CD4-positive, alpha-beta memory T cell (primary cell): ENCODE measurements at regions of chr15 and their contacts with region 1.

Region 1: DNA sequence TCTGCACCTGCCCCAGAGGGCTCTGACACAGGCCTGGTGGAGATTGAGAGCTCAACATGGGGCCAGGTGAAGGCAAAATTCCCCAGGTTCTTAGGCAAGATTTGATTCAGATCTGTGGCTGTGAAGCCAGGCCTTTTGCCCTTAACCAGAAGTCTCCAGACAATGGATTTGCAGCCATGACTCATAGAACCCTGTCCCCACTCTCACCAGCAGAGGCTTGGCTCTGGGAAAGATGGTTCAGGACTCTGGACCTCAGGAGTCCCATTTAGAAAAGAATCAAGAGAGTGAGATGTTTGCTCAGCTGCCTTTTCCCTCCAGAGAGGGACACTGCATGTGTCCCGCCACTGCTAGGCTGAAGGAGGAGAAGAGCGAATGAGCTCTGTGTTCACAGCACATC is 361.4 kb upstream of the ICE2 start:
- DNase-seq: peak in 1 of 5 donors; percentile 64
- H3K4me3 ChIP-seq: peak overlapping the region; percentile 48 to 60
- H3K4me3 Mint-ChIP-seq: peak overlapping the region; percentile 86 to 93 (median 91)
- H3K27ac ChIP-seq: peak overlapping the region; percentile 66
- H3K27ac Mint-ChIP-seq: peak overlapping the region; percentile 90 to 99 (median 96)
- H3K4me1 ChIP-seq: peaks cover 93% of the 10 kb centered on the region
- H3K4me1 Mint-ChIP-seq: peaks cover 68 to 98% (median 85%) of the 10 kb centered on the region in 4 donors
- H3K27me3 ChIP-seq: no peaks in the 10 kb centered on the region
- H3K27me3 Mint-ChIP-seq: no peaks in the 10 kb centered on the region

Region 2: DNA sequence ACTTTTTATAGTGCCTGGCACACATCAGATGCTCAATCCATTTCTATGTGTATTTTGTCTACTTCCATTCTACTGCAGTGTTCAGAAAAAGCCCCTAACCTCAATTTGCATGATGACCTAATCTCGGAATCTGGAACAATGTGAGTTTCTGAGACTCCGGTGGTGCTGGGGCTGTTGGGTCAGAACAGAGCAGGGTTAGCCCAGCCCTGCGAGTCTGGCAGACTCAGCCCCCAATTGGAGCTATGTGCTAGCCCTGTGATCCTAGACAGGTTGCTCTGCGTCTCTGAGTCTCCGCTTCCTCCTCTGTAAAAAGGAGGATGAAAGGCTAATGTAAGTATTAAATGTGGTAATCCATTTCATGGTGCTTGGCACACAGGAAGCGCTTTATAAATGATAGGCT is 266.4 kb before region 1 on chr15:
- CTCF ChIA-PET with region 1: interaction called, 4 read pairs
- POLR2A ChIA-PET with region 1: interaction called, 10 read pairs
- intact Hi-C with region 1: no loop called
- DNase-seq: peak; percentile 61 to 90 (median 63)
- H3K4me3 ChIP-seq: peak overlapping the region in 1 of 2 donors; percentile 12
- H3K4me3 Mint-ChIP-seq: peak overlapping the region; percentile 81 to 94 (median 89)
- H3K27ac ChIP-seq: peak overlapping the region; percentile 74
- H3K27ac Mint-ChIP-seq: peak overlapping the region; percentile 92 to 100 (median 99)
- H3K4me1 ChIP-seq: peaks cover 99% of the 10 kb centered on the region
- H3K4me1 Mint-ChIP-seq: peaks cover 76 to 96% (median 86%) of the 10 kb centered on the region in 4 donors
- H3K27me3 ChIP-seq: no peaks in the 10 kb centered on the region
- H3K27me3 Mint-ChIP-seq: no peaks in the 10 kb centered on the region

Region 3: DNA sequence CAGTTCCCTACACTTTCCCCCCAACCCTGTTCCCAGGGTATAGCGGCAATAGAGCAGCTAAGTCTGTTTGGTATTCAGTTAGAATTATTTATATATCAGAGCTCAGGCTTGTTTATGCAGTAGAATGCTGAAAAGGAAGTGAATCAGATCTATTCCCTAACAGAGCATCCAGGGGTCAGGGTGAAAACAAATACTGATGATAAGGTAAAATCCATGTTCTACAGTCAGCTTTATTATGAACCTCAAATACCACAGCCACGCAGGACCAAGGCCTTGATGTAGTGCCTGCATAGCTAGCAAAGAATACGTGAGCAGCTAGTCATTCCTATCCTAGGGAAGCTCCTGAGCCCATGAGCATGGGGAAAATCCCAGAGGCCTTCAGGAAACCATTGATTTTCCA is 131.6 kb before region 1 on chr15:
- CTCF ChIA-PET with region 1: interaction called, 3 read pairs
- POLR2A ChIA-PET with region 1: interaction called, 88 read pairs
- intact Hi-C with region 1: loop called (anchors 1 kb)
- DNase-seq: no peak
- H3K4me3 ChIP-seq: no peak overlapping the region
- H3K4me3 Mint-ChIP-seq: peak overlapping the region in 4 of 8 donors; percentile 0 to 48 (median 6)
- H3K27ac ChIP-seq: no peak overlapping the region
- H3K27ac Mint-ChIP-seq: peak overlapping the region in 3 of 7 donors; percentile 19 to 62 (median 41)
- H3K4me1 ChIP-seq: peaks cover 38% of the 10 kb centered on the region
- H3K4me1 Mint-ChIP-seq: peaks cover 35 to 53% (median 41%) of the 10 kb centered on the region in 4 donors
- H3K27me3 ChIP-seq: no peaks in the 10 kb centered on the region
- H3K27me3 Mint-ChIP-seq: no peaks in the 10 kb centered on the region

Region 4: DNA sequence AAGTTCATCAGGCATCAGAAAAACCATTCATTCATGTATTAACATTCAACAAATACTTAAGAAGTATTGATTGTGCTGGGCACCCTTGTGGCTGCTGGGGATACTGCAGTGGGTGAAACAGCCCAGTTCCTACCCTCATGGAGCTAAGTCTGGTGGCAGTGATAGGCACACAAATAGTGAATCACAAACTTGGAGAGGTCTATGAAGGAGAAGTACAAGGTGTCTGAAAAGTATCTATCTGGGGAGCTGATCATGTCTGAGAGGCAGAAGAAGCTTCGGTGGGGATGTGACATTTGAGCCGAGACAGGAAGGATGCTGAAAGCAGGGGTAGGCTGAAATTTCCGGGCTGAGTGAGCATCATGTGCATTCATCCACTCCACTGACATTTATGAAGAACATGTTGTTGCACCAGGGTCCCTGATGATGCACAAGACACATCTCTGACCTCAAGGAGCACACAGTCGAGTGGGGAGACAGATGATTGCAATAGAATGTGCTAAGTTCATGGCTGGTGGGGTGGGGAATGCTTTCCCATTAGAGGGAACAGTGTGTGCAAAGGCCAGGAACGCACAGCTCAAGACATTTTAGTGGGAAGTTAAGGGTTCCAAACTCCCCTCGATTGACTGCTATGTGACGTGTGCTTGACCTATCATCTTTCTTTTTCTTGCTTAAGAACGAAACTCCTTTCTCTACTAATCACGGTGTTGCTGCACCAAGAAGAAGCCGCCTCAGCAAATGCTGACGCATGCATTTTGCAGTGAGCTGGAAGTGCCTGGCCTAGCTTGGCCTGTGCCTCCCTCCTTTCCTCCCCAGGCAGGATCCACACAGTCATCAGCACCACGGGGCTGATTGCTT is 52.2 kb before region 1 on chr15:
- CTCF ChIA-PET with region 1: interaction called, 29 read pairs
- POLR2A ChIA-PET with region 1: interaction called, 151 read pairs
- intact Hi-C with region 1: no loop called
- DNase-seq: peak; percentile 43 to 64 (median 51)
- H3K4me3 ChIP-seq: peak overlapping the region in 1 of 2 donors; percentile 17
- H3K4me3 Mint-ChIP-seq: peak overlapping the region; percentile 56 to 78 (median 64)
- H3K27ac ChIP-seq: peak overlapping the region; percentile 53
- H3K27ac Mint-ChIP-seq: peak overlapping the region; percentile 72 to 97 (median 95)
- H3K4me1 ChIP-seq: peaks cover 42% of the 10 kb centered on the region
- H3K4me1 Mint-ChIP-seq: peaks cover 30 to 50% (median 38%) of the 10 kb centered on the region in 4 donors
- H3K27me3 ChIP-seq: no peaks in the 10 kb centered on the region
- H3K27me3 Mint-ChIP-seq: no peaks in the 10 kb centered on the region

Region 5: GRCh38 chr15:60814062-60814461 is 26.2 kb before region 1 on chr15:
- CTCF ChIA-PET with region 1: interaction called, 5 read pairs
- POLR2A ChIA-PET with region 1: interaction called, 48 read pairs
- intact Hi-C with region 1: loop called (anchors 2 kb)
- DNase-seq: no peak
- H3K4me3 ChIP-seq: no peak overlapping the region
- H3K4me3 Mint-ChIP-seq: no peak overlapping the region
- H3K27ac ChIP-seq: no peak overlapping the region
- H3K27ac Mint-ChIP-seq: peak overlapping the region in 5 of 7 donors; percentile 43 to 84 (median 74)
- H3K4me1 ChIP-seq: peaks cover 53% of the 10 kb centered on the region
- H3K4me1 Mint-ChIP-seq: peaks cover 37 to 61% (median 50%) of the 10 kb centered on the region in 4 donors
- H3K27me3 ChIP-seq: no peaks in the 10 kb centered on the region
- H3K27me3 Mint-ChIP-seq: no peaks in the 10 kb centered on the region

Region 6: GRCh38 chr15:60859996-60860494 is 19.7 kb after region 1 on chr15:
- CTCF ChIA-PET with region 1: interaction called, 65 read pairs
- POLR2A ChIA-PET with region 1: interaction called, 28 read pairs
- intact Hi-C with region 1: loop called (anchors 1 kb)
- DNase-seq: no peak
- H3K4me3 ChIP-seq: no peak overlapping the region
- H3K4me3 Mint-ChIP-seq: no peak overlapping the region
- H3K27ac ChIP-seq: no peak overlapping the region
- H3K27ac Mint-ChIP-seq: peak overlapping the region in 1 of 7 donors; percentile 1
- H3K4me1 ChIP-seq: peaks cover 6% of the 10 kb centered on the region
- H3K4me1 Mint-ChIP-seq: peaks cover 22 to 44% (median 33%) of the 10 kb centered on the region in 4 donors
- H3K27me3 ChIP-seq: no peaks in the 10 kb centered on the region
- H3K27me3 Mint-ChIP-seq: no peaks in the 10 kb centered on the region